ENCODE measurements at regions of chr9 and their contacts with region 1.

Region 1: GRCh38 chr9:68779558-68780384 is 74.7 kb downstream of the PIP5K1B start:
- DNase-seq: peak; percentile 96
- ATAC-seq: peak; percentile 87
- H3K4me3 Mint-ChIP-seq: no peak overlapping the region
- H3K27ac Mint-ChIP-seq: no peak overlapping the region
- H3K4me1 Mint-ChIP-seq: peaks cover 11% of the 10 kb centered on the region
- H3K27me3 Mint-ChIP-seq: peaks cover 6% of the 10 kb centered on the region

Region 2: DNA sequence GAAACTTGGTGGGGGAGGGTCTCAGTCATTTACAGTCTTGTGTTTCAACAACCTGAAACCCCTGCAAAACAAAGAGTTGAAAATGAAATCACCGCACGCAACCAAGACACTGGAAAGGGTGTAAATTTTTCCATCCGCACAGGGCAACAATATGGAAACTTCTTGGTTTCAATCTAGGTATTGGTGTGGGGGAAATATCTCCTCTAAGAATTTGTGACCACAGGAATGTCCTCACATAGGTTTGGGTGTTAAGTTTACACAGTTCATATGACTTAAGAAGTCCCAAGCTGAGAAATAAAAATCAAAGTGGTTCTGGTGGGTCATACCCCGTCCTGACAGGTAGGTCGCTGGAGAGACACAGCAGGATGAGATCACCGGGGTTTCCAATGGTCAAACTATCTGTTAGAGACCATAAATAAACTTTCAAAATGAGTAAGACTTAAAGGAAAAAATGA is 126.6 kb before region 1 on chr9:
- CTCF ChIA-PET with region 1: no interaction called
- POLR2A ChIA-PET with region 1: no interaction called
- intact Hi-C with region 1: loop called in 1 of 2 experiments (anchors 5 kb)
- DNase-seq: peak; percentile 67
- ATAC-seq: peak; percentile 73
- H3K4me3 Mint-ChIP-seq: no peak overlapping the region
- H3K27ac Mint-ChIP-seq: peak overlapping the region; percentile 72
- H3K4me1 Mint-ChIP-seq: peaks cover 35% of the 10 kb centered on the region
- H3K27me3 Mint-ChIP-seq: peaks cover 22% of the 10 kb centered on the region

Region 3: DNA sequence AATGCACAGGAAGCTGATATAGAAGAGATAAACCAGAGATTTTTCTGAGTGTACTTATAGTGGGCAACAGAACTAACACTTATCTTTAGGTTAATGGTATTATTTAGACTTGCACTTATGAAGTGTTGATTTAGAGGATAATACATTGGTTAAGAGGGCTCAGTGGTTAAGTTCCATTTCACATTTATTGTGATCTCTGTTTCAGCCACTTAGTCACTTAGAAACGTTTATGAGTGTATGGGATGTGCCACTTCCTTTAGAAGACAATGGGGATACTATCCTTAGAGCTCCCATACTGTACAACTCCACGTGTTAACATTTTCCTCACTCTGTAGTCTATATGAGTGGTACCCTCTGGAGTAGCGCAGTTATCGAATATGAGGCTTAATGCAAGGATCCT is 17.2 kb before region 1 on chr9:
- CTCF ChIA-PET with region 1: no interaction called
- POLR2A ChIA-PET with region 1: no interaction called
- intact Hi-C with region 1: no loop called
- DNase-seq: no peak
- ATAC-seq: no peak
- H3K4me3 Mint-ChIP-seq: no peak overlapping the region
- H3K27ac Mint-ChIP-seq: no peak overlapping the region
- H3K4me1 Mint-ChIP-seq: no peaks in the 10 kb centered on the region
- H3K27me3 Mint-ChIP-seq: peaks cover 23% of the 10 kb centered on the region

Region 4: DNA sequence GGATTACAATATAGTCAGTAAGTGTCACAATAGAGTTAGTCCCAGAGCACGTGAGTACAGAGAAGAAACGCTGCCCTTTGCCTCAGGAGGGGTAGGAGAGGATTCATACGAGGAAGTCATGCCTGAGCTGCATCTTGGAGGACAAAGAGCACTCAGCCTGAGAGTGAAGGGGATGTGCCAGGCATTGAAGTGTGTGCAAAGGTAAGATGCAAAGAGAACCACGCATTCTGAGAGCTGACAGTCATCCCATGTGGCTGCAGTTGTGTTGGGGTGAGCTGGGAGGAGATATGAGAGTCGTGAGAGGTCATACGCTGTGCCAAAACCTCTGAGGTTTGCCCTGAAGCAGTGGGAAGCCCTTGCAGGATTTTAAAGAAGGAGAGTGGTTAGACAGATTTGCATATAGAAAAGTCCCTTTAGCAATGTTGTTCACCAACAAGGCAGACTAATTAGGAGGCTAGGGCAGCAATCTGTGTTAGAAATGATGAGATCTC is 22.8 kb after region 1 on chr9:
- CTCF ChIA-PET with region 1: interaction called, 3 read pairs
- POLR2A ChIA-PET with region 1: no interaction called
- intact Hi-C with region 1: loop called in 1 of 2 experiments (anchors 1 kb)
- DNase-seq: peak; percentile 77
- ATAC-seq: peak; percentile 98
- H3K4me3 Mint-ChIP-seq: no peak overlapping the region
- H3K27ac Mint-ChIP-seq: no peak overlapping the region
- H3K4me1 Mint-ChIP-seq: peaks cover 3% of the 10 kb centered on the region
- H3K27me3 Mint-ChIP-seq: peaks cover 2% of the 10 kb centered on the region

Region 5: GRCh38 chr9:68974431-68974830 is 194.7 kb after region 1 on chr9:
- CTCF ChIA-PET with region 1: no interaction called
- POLR2A ChIA-PET with region 1: no interaction called
- intact Hi-C with region 1: loop called in 1 of 2 experiments (anchors 2 kb)
- DNase-seq: peak; percentile 58
- ATAC-seq: peak; percentile 95
- H3K4me3 Mint-ChIP-seq: peak overlapping the region; percentile 8
- H3K27ac Mint-ChIP-seq: peak overlapping the region; percentile 77
- H3K4me1 Mint-ChIP-seq: peaks cover 48% of the 10 kb centered on the region
- H3K27me3 Mint-ChIP-seq: peaks cover 3% of the 10 kb centered on the region

Region 6: GRCh38 chr9:69035438-69036308 is 255.9 kb after region 1 on chr9 and contains the start of gene FXN:
- CTCF ChIA-PET with region 1: no interaction called
- POLR2A ChIA-PET with region 1: no interaction called
- intact Hi-C with region 1: loop called (anchors 1 to 5 kb)
- DNase-seq: peak; percentile 91
- ATAC-seq: peak; percentile 94
- H3K4me3 Mint-ChIP-seq: peak within 1 kb of the TSS; percentile 89
- H3K27ac Mint-ChIP-seq: peak within 1 kb of the TSS; percentile 91
- H3K4me1 Mint-ChIP-seq: peaks cover 20% of the 10 kb centered on the region
- H3K27me3 Mint-ChIP-seq: no peaks in the 10 kb centered on the region
- total RNA-seq, gene FXN: 23.2 to 24.2 TPM

Measured in activated CD4-positive, alpha-beta T cell treated with anti-CD3 and anti-CD28 coated beads for 36 hours (primary cell).